Heart right ventricle (tissue), 16 donors: ENCODE measurements at regions of chr12 and their contacts with region 1.

Region 1: GRCh38 chr12:131290255-131290959 is 336.7 kb downstream of the ADGRD1 start:
- DNase-seq: no peak
- ATAC-seq: no peak
- H3K4me3 ChIP-seq: no peak overlapping the region
- H3K27ac ChIP-seq: no peak overlapping the region
- H3K4me1 ChIP-seq: no peaks in the 10 kb centered on the region
- H3K27me3 ChIP-seq: peaks cover 0 to 9% (median 0%) of the 10 kb centered on the region in 7 donors
- CTCF ChIP-seq: no peak

Region 2: GRCh38 chr12:131673888-131674257 is 383.5 kb after region 1 on chr12:
- intact Hi-C with region 1: loop called in 3 of 10 experiments (anchors 5 to 10 kb)
- DNase-seq: no peak
- ATAC-seq: no peak
- H3K4me3 ChIP-seq: no peak overlapping the region
- H3K27ac ChIP-seq: peak overlapping the region in 1 of 10 donors; percentile 74
- H3K4me1 ChIP-seq: peaks cover 0 to 10% (median 0%) of the 10 kb centered on the region in 9 donors
- H3K27me3 ChIP-seq: peaks cover 3 to 44% (median 12%) of the 10 kb centered on the region in 7 donors
- CTCF ChIP-seq: no peak